ENCODE measurements at regions of chr18 and their contacts with region 1.

Region 1: GRCh38 chr18:21281611-21282010 is 39.6 kb downstream of the GREB1L start:
- DNase-seq: no peak
- ATAC-seq: no peak
- H3K4me3 ChIP-seq: no peak overlapping the region
- H3K27ac ChIP-seq: no peak overlapping the region
- H3K4me1 ChIP-seq: no peaks in the 10 kb centered on the region
- H3K27me3 ChIP-seq: no peaks in the 10 kb centered on the region
- CTCF ChIP-seq: no peak

Region 2: DNA sequence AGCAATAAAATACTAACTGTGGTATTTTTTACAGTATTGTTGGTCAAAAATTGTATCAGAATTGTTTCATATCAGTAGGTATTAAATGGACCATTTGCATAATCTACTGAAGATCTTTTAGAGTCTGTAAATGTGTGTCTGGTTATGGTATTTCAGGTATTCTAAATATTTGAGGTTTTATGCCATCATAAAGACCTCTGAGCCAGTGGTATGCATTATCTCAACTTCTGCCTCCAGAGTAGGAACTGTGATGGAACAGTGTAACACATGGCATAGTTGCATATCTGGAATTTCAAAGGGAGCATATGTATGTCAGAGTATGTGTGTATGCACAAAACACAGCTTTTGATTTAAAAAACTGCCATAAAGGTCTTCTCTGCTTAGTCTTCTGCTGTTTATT is 24.2 kb before region 1 on chr18:
- CTCF ChIA-PET with region 1: no interaction called
- POLR2A ChIA-PET with region 1: interaction called, 14 read pairs
- in situ Hi-C with region 1: no loop called
- intact Hi-C with region 1: no loop called
- DNase-seq: no peak
- ATAC-seq: no peak
- H3K4me3 ChIP-seq: no peak overlapping the region
- H3K27ac ChIP-seq: no peak overlapping the region
- H3K4me1 ChIP-seq: peaks cover 3% of the 10 kb centered on the region; the same call in 1 of the 2 replicates
- H3K27me3 ChIP-seq: no peaks in the 10 kb centered on the region
- CTCF ChIP-seq: no peak